ENCODE measurements at regions of chr1 and their contacts with region 1.

Region 1: GRCh38 chr1:95084317-95085176 is 11.8 kb upstream of the ALG14 start:
- DNase-seq: peak in 2 of 4 donors; percentile 25 to 51
- ATAC-seq: peak; percentile 77
- H3K4me3 ChIP-seq: no peak overlapping the region
- H3K27ac ChIP-seq: no peak overlapping the region
- H3K4me1 ChIP-seq: no peaks in the 10 kb centered on the region
- H3K27me3 ChIP-seq: no peaks in the 10 kb centered on the region
- CTCF ChIP-seq: peak; percentile 37 to 58

Region 2: DNA sequence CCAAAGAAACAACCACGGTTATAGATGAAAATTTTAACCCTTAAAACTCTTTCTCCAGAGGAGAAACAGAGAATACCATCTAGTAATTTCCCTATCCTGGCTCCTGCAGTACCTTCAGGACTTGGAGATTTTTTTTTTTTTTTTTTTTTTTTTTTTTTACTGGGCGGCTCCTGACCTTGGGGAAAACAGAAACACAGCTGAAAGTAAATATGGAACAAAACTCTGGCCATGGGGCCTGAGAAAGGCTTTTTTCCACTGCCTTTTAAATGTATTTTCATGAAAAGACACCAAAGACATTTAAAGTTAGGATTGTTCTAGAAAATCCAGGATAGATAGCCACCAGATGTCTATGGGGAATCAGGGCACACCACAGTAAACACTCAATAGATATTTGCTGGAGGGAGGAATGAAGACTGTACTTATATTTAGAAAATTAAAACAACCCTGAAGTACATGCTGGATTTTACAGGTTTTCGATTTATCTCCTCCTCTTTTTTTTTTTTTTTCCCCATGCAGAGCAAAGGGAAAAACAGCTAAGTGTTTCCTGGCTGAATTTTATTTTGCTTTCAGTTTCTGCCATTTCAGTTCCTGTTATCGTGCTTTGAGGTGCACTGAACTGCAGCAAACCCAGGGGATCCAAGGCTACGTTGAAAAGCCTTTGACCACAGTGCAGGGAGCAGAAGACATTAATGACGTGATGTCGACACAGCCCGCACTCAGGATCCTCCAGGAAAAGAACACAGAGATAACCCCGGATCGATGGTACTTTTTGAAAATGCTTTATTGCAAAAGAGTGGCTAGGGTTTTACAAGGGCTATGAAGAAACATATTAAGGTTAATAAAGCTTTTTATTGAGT is 121.9 kb before region 1 on chr1:
- intact Hi-C with region 1: no loop called
- DNase-seq: peak in 2 of 4 donors; percentile 9 to 39
- ATAC-seq: peak; percentile 82
- H3K4me3 ChIP-seq: peak overlapping the region in 1 of 2 donors; percentile 25
- H3K27ac ChIP-seq: peak overlapping the region; percentile 74 to 80
- H3K4me1 ChIP-seq: peaks cover 0 to 16% of the 10 kb centered on the region in 2 donors
- H3K27me3 ChIP-seq: no peaks in the 10 kb centered on the region
- CTCF ChIP-seq: no peak

Region 3: GRCh38 chr1:95233737-95234500 is 149.4 kb after region 1 on chr1 and contains the start of gene RWDD3:
- intact Hi-C with region 1: loop called in 1 of 2 experiments (anchors 10 kb)
- DNase-seq: peak; percentile 93 to 100 (median 95)
- ATAC-seq: peak; percentile 99
- H3K4me3 ChIP-seq: peak within 1 kb of the TSS; percentile 81 to 99
- H3K27ac ChIP-seq: peak within 1 kb of the TSS; percentile 84 to 86
- H3K4me1 ChIP-seq: peaks cover 0 to 13% of the 10 kb centered on the region in 2 donors
- H3K27me3 ChIP-seq: no peaks in the 10 kb centered on the region
- CTCF ChIP-seq: peak; percentile 85 to 96
- polyA plus RNA-seq, gene RWDD3: 45.4 to 58.6 (median 47.4) TPM